Endothelial cell of umbilical vein (primary cell): ENCODE measurements at regions of chr11 and their contacts with region 1.

Region 1: GRCh38 chr11:5137014-5137413 is 1.1 kb downstream of the OR52A5 start:
- DNase-seq: no peak
- H3K4me3 ChIP-seq: no peak overlapping the region
- H3K27ac ChIP-seq: no peak overlapping the region
- H3K4me1 ChIP-seq: no peaks in the 10 kb centered on the region
- H3K27me3 ChIP-seq: no peaks in the 10 kb centered on the region
- CTCF ChIP-seq: no peak
- POLR2A ChIP-seq: no peak

Region 2: DNA sequence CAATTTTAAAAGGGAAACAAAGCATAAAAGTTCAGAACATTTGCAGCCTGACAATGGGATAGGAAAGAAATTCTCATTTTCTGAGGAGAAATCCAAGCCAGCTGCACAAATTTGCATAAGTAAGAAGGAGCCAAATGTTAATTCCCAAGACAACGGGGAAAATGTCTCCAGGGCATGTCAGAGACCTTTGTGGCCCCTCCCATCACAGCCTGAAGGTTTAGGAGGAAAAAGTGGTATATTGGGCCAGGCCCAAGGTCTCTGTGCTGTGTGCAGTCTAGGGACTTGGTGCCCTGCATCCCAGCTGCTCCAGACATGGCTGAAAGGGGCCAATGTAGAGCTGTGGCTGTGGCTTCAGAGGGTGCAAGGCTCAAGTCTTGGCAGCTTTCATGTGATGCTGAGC is 354.5 kb before region 1 on chr11:
- CTCF ChIA-PET with region 1: no interaction called
- POLR2A ChIA-PET with region 1: no interaction called
- dilution Hi-C with region 1: no loop called
- intact Hi-C with region 1: no loop called
- DNase-seq: no peak
- H3K4me3 ChIP-seq: no peak overlapping the region
- H3K27ac ChIP-seq: no peak overlapping the region
- H3K4me1 ChIP-seq: no peaks in the 10 kb centered on the region
- H3K27me3 ChIP-seq: no peaks in the 10 kb centered on the region
- CTCF ChIP-seq: no peak
- POLR2A ChIP-seq: no peak

Region 3: GRCh38 chr11:5153574-5154431 is 16.8 kb after region 1 on chr11:
- CTCF ChIA-PET with region 1: interaction called, 10 read pairs
- POLR2A ChIA-PET with region 1: no interaction called
- dilution Hi-C with region 1: no loop called
- intact Hi-C with region 1: no loop called
- DNase-seq: no peak
- H3K4me3 ChIP-seq: no peak overlapping the region
- H3K27ac ChIP-seq: no peak overlapping the region
- H3K4me1 ChIP-seq: no peaks in the 10 kb centered on the region
- H3K27me3 ChIP-seq: no peaks in the 10 kb centered on the region
- CTCF ChIP-seq: no peak
- POLR2A ChIP-seq: no peak